ENCODE measurements at regions of chr7 and their contacts with region 1.

Region 1: GRCh38 chr7:39894904-39895303 is 55.2 kb upstream of the CDK13 start:
- DNase-seq: no peak
- H3K4me3 ChIP-seq: no peak overlapping the region
- H3K27ac ChIP-seq: no peak overlapping the region
- H3K4me1 ChIP-seq: no peaks in the 10 kb centered on the region
- H3K27me3 ChIP-seq: peaks cover 0 to 9% of the 10 kb centered on the region in 2 donors
- CTCF ChIP-seq: no peak

Region 2: GRCh38 chr7:40057292-40057691 is 162.4 kb after region 1 on chr7:
- intact Hi-C with region 1: loop called (anchors 5 kb)
- DNase-seq: no peak
- H3K4me3 ChIP-seq: no peak overlapping the region
- H3K27ac ChIP-seq: no peak overlapping the region
- H3K4me1 ChIP-seq: peaks cover 0 to 23% (median 5%) of the 10 kb centered on the region in 4 donors
- H3K27me3 ChIP-seq: no peaks in the 10 kb centered on the region
- CTCF ChIP-seq: no peak

Measured in tibial artery (tissue), 4 donors.